ENCODE measurements at regions of chr1 and their contacts with region 1.

Region 1: GRCh38 chr1:28886731-28887418 is 27.5 kb upstream of the EPB41 start:
- DNase-seq: peak; percentile 99
- CTCF ChIP-seq: no peak

Region 2: DNA sequence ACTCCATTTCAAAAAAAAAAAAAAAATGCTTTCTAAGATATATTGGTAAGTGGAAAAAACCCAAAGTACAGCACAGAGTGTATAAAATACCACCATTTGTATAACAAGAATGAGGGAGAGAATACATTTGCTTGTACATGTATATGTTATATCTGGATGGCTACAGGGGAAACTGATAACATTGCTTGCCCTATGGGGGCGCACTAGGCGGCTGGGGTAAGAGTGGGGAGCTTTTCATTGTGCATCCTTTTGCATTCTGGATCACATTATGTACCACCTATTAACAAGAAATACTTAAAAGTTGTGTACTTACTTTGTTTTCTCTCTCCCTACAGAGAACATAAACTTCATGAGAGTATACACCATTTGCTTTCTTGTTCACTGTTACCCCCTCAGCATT is 103.5 kb before region 1 on chr1:
- CTCF ChIA-PET with region 1: interaction called, 13 read pairs
- POLR2A ChIA-PET with region 1: no interaction called
- DNase-seq: no peak
- CTCF ChIP-seq: no peak

Region 3: GRCh38 chr1:28845786-28846543 is 40.9 kb before region 1 on chr1:
- CTCF ChIA-PET with region 1: no interaction called
- POLR2A ChIA-PET with region 1: no interaction called
- DNase-seq: no peak
- CTCF ChIP-seq: peak; percentile 24

Region 4: DNA sequence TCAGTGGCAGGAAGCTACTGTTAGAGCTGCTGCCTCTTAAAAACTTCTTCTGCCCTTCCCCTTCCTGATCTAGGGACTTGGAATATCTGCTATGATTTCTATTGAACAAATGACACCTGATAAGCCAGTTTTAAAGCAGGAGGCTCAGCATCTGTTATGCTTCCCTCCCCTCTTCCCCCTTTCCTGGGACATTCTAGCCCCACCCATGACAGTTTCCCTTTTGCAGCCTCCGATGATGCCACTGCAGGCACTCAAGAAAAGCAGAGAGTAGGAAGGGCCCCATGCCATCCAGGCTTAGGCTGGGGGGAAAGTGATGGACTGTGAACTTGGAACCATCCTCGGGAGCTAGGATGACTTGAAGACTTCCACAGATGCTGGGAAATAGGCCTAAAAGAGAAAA is 12.4 kb after region 1 on chr1:
- CTCF ChIA-PET with region 1: interaction called, 10 read pairs
- POLR2A ChIA-PET with region 1: no interaction called
- DNase-seq: no peak
- CTCF ChIP-seq: no peak

Region 5: GRCh38 chr1:29033829-29034466 is 147.1 kb after region 1 on chr1:
- CTCF ChIA-PET with region 1: interaction called, 253 read pairs
- POLR2A ChIA-PET with region 1: interaction called, 3 read pairs
- DNase-seq: peak; percentile 62
- CTCF ChIP-seq: peak; percentile 64

Region 6: DNA sequence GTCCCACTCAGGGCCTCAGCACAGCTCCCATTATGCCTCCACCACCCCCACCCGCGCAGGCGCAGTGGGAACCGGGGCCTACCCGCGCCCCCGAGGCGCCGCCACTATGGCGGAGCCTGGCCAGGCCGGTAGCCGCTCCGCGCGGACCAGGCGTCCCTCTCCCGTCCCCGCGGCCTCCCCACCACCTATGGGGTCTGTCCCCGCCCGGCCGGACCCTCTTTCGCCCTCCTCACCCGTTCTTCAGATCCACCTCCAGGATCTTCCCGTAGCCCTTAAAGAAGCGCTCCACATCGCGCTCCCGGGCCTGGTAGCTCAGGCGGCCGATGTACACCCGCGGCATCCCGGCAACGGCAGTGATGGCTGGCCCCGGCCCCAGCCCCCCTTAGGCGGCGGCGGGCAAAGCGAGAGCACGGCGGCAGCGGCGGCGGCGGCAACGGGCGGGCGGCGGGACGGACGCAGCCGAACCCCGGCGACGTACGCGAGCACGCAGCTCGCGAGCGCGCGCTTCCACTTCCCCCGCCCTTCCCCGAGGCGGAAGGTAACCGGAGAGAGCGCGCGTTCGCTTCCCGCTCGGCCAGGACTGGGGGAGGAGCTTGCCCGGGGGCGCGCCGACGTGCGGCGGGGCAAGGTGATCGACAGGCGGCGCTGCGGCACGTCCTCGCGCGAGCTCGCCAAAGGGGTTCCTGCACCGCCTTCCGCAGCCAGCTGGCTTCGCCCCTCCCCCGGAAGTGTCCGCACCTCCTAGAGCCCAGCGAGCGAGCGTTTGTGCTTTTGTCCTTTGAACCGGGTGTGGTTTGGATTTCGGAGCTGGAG is 294.7 kb after region 1 on chr1 and contains the start of gene SRSF4:
- CTCF ChIA-PET with region 1: interaction called, 10 read pairs
- POLR2A ChIA-PET with region 1: no interaction called
- DNase-seq: peak; percentile 99
- CTCF ChIP-seq: peak; percentile 84

Region 7: DNA sequence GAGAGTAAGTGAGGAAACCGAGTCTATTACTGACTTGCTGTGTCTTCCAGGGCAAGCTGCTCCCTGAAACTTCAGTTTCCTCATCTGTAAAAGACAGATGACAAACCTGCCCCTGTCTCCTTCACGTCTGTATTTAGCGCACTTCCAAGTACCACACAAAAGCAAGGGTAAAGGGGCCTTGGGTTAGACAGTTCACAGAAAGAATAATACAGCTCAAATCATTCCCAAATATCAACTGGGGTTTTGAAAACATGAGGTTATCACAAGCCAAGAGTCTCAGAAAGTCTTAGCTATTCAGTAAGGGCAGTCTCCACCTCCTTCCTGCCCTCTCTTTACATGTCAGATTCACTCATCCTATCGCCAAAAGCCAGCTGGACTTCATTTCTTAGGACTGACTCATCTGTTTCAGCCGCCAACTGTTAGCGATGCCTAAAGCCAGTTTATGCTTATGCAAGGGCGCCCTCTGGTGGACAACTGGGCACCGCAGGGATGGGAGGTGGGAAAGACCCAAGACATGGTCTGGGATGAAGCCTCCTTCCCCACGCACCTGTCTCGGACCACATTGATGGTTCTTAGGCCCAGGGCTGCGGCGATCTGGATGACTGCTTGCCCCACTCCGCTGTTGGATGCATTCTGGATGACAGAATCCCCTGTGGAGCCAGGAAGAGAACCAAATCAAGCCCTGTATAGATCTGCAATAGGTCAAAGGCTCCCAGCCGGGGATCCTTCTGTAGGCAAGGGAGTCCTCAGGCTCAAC is 315.9 kb after region 1 on chr1:
- CTCF ChIA-PET with region 1: interaction called, 70 read pairs
- POLR2A ChIA-PET with region 1: no interaction called
- DNase-seq: peak; percentile 87
- CTCF ChIP-seq: peak; percentile 96

Measured in GM10248 (cell line).